GM13976 (cell line): ENCODE measurements at regions of chr10 and their contacts with region 1.

Region 1: DNA sequence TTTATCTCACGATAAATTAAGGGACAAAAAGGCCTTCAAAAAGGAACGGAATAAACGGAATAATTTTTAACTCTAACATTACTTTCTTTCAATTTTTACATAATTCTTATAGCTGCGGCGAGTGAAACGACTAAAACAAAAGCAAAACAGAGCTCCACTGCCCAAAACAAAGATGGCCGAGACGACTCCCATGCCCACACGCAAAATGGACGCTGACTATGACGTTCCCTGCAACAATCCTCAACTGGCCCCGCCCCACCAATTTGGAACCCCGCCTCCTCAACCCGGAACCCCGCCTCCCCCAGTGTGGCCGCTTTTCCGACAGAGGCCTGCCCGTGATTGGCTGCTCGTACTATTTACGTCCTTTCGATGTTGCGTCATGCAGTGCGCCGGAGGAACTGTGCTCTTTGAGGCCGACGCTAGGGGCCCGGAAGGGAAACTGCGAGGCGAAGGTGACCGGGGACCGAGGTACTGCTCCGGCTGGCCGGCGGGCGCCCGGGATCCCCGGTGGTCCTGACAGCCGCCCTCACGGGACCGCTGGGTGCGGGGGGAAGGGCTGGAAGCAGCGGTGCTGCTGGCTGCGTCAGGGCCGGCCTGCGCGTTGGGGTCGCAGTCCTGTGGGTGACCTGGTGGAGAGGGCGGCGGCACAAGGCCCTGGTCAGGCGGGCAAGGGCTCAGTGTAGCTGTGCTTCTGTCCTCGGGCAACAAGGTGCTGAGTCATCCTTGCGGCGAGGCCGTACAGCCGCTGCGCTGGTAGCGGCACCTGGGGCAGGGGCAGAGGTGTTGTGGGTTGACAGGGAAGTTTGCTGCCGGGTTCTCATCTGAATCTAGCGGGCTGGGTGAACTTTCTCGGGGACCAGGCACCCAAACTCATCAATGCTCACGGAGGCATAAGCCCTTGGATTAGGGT is at the start of gene GHITM:
- DNase-seq: peak; percentile 94
- CTCF ChIP-seq: no peak

Region 2: GRCh38 chr10:83229991-83230390 is 909.4 kb before region 1 on chr10:
- in situ Hi-C with region 1: no loop called
- DNase-seq: no peak
- CTCF ChIP-seq: no peak

Region 3: GRCh38 chr10:84038035-84038434 is 101.3 kb before region 1 on chr10:
- in situ Hi-C with region 1: no loop called
- DNase-seq: no peak
- CTCF ChIP-seq: no peak

Region 4: GRCh38 chr10:84205049-84205852 is 65.9 kb after region 1 on chr10:
- in situ Hi-C with region 1: loop called (anchors 10 kb)
- DNase-seq: peak; percentile 79
- CTCF ChIP-seq: peak; percentile 95

Region 5: GRCh38 chr10:84552478-84552877 is 413.1 kb after region 1 on chr10:
- in situ Hi-C with region 1: no loop called
- DNase-seq: no peak
- CTCF ChIP-seq: no peak